Right cardiac atrium (tissue), 5 donors: ENCODE measurements at regions of chr20 and their contacts with region 1.

Region 1: GRCh38 chr20:3679749-3680700 is 1.8 kb downstream of the ADAM33 start:
- DNase-seq: peak; percentile 80 to 90 (median 84)
- ATAC-seq: peak; percentile 54 to 66
- H3K4me3 ChIP-seq: no peak overlapping the region
- H3K27ac ChIP-seq: peak overlapping the region; percentile 40
- H3K4me1 ChIP-seq: no peaks in the 10 kb centered on the region
- H3K27me3 ChIP-seq: no peaks in the 10 kb centered on the region

Region 2: GRCh38 chr20:2967841-2968240 is 712.2 kb before region 1 on chr20:
- intact Hi-C with region 1: no loop called
- DNase-seq: no peak
- ATAC-seq: no peak
- H3K4me3 ChIP-seq: no peak overlapping the region
- H3K27ac ChIP-seq: no peak overlapping the region
- H3K4me1 ChIP-seq: no peaks in the 10 kb centered on the region
- H3K27me3 ChIP-seq: no peaks in the 10 kb centered on the region

Region 3: GRCh38 chr20:3621111-3621510 is 58.9 kb before region 1 on chr20:
- intact Hi-C with region 1: no loop called
- DNase-seq: no peak
- ATAC-seq: no peak
- H3K4me3 ChIP-seq: no peak overlapping the region
- H3K27ac ChIP-seq: no peak overlapping the region
- H3K4me1 ChIP-seq: no peaks in the 10 kb centered on the region
- H3K27me3 ChIP-seq: no peaks in the 10 kb centered on the region

Region 4: GRCh38 chr20:3710703-3711483 is 30.9 kb after region 1 on chr20:
- intact Hi-C with region 1: loop called (anchors 2 to 5 kb)
- DNase-seq: peak; percentile 72 to 93 (median 91)
- ATAC-seq: peak; percentile 47 to 60
- H3K4me3 ChIP-seq: no peak overlapping the region
- H3K27ac ChIP-seq: no peak overlapping the region
- H3K4me1 ChIP-seq: no peaks in the 10 kb centered on the region
- H3K27me3 ChIP-seq: no peaks in the 10 kb centered on the region

Region 5: GRCh38 chr20:3767427-3768341 is 87.7 kb after region 1 on chr20 and contains the start of gene ADISSP:
- intact Hi-C with region 1: loop called in 2 of 4 experiments (anchors 5 to 10 kb)
- DNase-seq: peak; percentile 100
- ATAC-seq: peak; percentile 96 to 98
- H3K4me3 ChIP-seq: peak within 1 kb of the TSS; percentile 49
- H3K27ac ChIP-seq: peak within 1 kb of the TSS; percentile 51
- H3K4me1 ChIP-seq: no peaks in the 10 kb centered on the region
- H3K27me3 ChIP-seq: no peaks in the 10 kb centered on the region
- total RNA-seq, gene ADISSP: 11.7 to 13.7 (median 12.1) TPM

Region 6: DNA sequence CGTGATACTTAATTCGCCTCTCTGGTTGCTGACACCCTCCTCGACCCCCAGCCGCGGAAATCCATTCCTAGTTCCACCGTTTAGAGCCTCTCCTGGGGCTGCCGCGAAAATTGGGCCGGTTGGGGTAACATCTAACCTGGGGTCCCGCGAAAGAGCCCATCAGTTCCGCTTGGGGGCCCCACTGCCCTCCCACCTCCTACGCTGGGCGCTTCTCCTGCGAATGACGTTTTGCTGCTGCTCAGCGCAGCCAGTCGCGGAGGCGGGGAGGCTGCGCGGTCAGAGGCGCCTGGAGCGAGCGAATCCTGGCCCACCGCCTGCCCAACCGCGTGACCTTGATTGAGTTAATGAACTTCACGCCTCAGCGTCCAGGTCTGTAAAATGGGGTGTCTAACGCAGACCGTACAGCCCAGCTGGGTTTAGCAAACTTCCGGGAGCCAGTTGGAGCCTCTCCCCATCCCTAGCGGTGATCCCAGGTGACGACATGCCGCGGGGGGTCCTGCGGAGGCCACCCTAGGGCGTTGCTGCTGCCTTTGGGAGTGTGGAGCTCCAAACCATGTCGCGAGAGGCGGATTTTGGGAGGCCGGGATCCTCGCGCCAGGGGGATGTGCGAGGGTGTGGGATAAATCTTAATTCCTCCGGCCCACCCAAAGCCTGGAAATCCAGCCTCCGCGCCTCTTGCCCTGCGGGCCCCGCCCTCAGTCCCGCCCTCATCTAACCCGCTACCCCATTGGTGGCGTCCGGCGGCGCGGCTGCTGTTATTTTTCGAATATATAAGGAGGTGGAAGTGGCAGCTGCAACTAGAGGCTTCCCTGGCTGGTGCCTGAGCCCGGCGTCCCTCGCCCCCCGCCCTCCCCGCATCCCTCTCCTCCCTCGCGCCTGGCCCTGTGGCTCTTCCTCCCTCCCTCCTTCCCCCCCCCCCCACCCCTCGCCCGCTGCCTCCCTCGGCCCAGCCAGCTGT is 115.8 kb after region 1 on chr20 and contains the start of gene CDC25B:
- intact Hi-C with region 1: no loop called
- DNase-seq: peak; percentile 95 to 99 (median 97)
- ATAC-seq: peak; percentile 96
- H3K4me3 ChIP-seq: peak within 1 kb of the TSS; percentile 57
- H3K27ac ChIP-seq: peak within 1 kb of the TSS; percentile 98
- H3K4me1 ChIP-seq: no peaks in the 10 kb centered on the region
- H3K27me3 ChIP-seq: no peaks in the 10 kb centered on the region
- total RNA-seq, gene CDC25B: 10.0 to 12.2 (median 11.4) TPM

Region 7: DNA sequence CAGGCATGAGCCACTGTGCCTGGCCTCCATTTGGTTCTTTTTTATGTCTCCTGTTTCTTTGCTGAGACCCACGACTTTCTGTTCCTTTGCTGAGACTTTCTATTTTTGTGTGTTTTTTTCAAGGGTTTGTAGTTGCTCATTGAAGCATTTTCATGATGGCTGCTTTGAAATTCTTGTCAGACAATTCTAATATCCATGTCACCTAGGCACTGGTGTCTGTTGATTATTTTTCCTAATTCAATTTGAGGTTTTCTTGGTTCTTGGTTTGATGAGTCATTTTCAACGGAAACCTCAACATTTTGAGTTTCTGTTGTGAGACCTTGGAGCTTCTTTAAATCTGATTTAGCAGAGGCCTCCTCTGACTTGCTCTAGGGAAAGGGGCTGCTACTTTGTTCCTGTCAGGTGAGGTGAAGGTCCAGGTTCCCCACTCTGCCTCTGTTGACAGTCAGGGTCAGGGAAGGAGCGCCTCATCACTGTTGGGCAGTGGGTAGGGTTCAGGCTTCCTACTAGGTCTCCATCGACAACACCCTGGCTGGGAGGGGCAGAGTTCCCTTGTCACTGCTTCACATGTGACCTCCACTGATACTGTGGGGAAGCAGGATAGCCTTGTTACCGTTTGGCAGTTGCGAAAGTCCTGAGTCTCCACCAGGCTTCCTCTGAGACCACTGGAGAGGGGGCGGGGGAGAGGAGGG is 402.5 kb after region 1 on chr20:
- intact Hi-C with region 1: loop called in 1 of 4 experiments (anchors 10 kb)
- DNase-seq: peak; percentile 63 to 80 (median 75)
- ATAC-seq: peak; percentile 70 to 76
- H3K4me3 ChIP-seq: no peak overlapping the region
- H3K27ac ChIP-seq: peak overlapping the region; percentile 88
- H3K4me1 ChIP-seq: peaks cover 4% of the 10 kb centered on the region
- H3K27me3 ChIP-seq: no peaks in the 10 kb centered on the region